ENCODE measurements at regions of chr6 and their contacts with region 1.

Region 1: DNA sequence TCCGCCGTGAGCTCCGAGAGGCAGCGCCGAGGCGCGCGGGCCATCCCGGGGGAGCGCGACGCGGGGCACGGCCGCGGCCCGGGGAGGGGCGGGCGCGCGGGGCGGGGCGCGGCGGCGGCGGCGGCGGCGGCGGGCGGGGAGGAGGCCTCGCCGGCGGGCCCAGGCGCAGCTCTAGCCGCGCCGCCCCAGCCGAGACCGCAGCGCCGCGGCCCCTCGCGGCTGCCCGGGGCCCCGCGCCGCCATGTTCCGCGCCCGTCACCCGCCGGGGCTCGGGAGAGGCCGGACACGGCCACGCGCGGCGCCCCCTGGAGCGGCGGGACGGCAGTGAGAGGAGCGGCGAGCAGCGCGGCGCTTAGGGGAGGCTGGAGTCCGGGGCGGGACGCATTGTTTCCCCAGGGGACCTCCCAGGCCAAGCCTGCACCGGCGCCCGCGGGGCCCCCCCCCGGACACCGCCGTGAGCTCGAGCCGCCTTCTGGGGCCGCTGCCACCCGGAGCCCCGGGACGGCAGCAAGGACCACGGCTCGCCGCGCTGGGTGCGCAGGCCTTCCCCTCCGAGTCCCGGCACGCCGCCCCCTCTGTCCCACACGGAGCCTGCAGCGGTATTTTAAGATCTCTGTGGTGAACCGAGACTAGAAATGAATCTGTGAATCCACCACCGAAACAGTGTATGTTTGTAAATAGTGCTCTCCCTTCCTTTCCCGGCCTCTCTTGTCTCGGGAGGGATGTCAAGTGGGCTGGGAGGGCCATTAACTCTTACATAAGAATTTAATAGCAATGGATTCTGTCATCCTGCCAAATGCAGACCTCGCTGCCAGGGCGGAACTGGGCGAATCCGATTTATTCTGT is at the start of gene KIF13A:
- DNase-seq: peak; percentile 59
- ATAC-seq: peak; percentile 87
- H3K4me3 ChIP-seq: peak within 1 kb of the TSS; percentile 84
- H3K27ac ChIP-seq: peak within 1 kb of the TSS; percentile 85
- H3K4me1 ChIP-seq: peaks cover 10% of the 10 kb centered on the region
- H3K27me3 ChIP-seq: no peaks in the 10 kb centered on the region
- CTCF ChIP-seq: peak; percentile 41
- POLR2A ChIP-seq: no peak
- RAD21 ChIP-seq: peak; percentile 35
- total RNA-seq, gene KIF13A: 51.8 and 53.0 TPM in 2 replicates

Region 2: GRCh38 chr6:17816921-17817611 is 170.7 kb before region 1 on chr6:
- CTCF ChIA-PET with region 1: interaction called, 3 read pairs
- POLR2A ChIA-PET with region 1: no interaction called
- dilution Hi-C with region 1: no loop called
- in situ Hi-C with region 1: no loop called
- intact Hi-C with region 1: loop called (anchors 5 kb)
- DNase-seq: peak; percentile 75
- ATAC-seq: peak; percentile 90
- H3K4me3 ChIP-seq: no peak overlapping the region
- H3K27ac ChIP-seq: peak overlapping the region; percentile 41; the same call in 1 of the 2 replicates
- H3K4me1 ChIP-seq: peaks cover 6% of the 10 kb centered on the region
- H3K27me3 ChIP-seq: no peaks in the 10 kb centered on the region
- CTCF ChIP-seq: peak; percentile 48
- POLR2A ChIP-seq: no peak
- RAD21 ChIP-seq: peak; percentile 55

Region 3: DNA sequence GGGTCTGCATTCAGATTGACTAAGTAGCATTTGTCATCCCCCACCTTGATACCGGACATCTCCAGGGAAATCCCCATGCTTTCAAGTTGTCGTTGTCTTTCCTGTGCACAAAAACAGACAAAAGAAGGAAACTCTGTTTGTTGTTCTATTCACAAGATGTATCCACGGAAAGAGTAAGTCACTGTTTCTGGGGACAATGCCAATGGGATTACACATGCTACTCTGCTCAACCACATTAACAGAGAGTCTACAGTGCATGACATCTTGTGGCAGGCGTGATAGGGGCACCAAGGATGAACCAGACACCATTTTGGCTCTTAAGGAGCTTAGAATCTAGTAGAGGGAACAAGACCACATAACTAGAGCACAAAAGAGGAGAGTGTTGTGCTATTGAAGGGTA is 156.7 kb before region 1 on chr6:
- CTCF ChIA-PET with region 1: no interaction called
- POLR2A ChIA-PET with region 1: no interaction called
- dilution Hi-C with region 1: no loop called
- in situ Hi-C with region 1: loop called (anchors 10 kb)
- intact Hi-C with region 1: loop called (anchors 2 kb)
- DNase-seq: peak; percentile 83
- ATAC-seq: no peak
- H3K4me3 ChIP-seq: no peak overlapping the region
- H3K27ac ChIP-seq: no peak overlapping the region
- H3K4me1 ChIP-seq: peaks cover 3% of the 10 kb centered on the region
- H3K27me3 ChIP-seq: no peaks in the 10 kb centered on the region
- CTCF ChIP-seq: no peak
- POLR2A ChIP-seq: no peak
- RAD21 ChIP-seq: no peak

Measured in IMR-90 (cell line).